Heart right ventricle (tissue), 16 donors: ENCODE measurements at regions of chr17 and their contacts with region 1.

Region 1: DNA sequence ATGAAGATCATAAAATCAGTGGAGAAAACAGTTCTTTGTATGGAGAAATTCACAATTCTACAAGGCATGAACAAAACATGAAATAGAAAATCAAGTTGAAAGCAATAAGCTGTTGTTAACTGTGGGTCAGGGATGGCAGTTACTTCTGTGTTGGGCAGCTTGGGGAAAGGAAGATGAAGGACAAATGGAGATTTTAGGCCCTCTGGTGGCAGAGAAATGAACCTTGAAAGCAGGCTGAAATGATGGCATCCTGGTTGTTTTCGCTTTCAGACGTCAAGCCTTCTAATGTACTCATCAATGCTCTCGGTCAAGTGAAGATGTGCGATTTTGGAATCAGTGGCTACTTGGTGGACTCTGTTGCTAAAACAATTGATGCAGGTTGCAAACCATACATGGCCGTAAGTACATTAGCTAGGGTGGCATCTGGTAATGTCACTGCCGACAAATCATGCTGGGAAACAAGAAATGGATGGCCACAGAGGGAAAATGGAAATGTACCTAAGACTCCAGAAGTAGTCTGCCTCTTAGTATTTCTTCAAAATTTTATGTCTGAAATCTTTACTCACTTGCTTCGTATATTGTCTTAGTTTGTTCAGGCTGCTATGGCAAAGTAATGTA is 108.9 kb downstream of the MAP2K6 start:
- DNase-seq: peak in 1 of 2 donors; percentile 21
- ATAC-seq: peak in 5 of 8 donors; percentile 61 to 75 (median 65)
- H3K4me3 ChIP-seq: peak overlapping the region in 1 of 10 donors; percentile 6
- H3K27ac ChIP-seq: no peak overlapping the region
- H3K4me1 ChIP-seq: peaks cover 0 to 6% (median 0%) of the 10 kb centered on the region in 9 donors
- H3K27me3 ChIP-seq: no peaks in the 10 kb centered on the region
- CTCF ChIP-seq: peak; percentile 48 to 73 (median 69)

Region 2: DNA sequence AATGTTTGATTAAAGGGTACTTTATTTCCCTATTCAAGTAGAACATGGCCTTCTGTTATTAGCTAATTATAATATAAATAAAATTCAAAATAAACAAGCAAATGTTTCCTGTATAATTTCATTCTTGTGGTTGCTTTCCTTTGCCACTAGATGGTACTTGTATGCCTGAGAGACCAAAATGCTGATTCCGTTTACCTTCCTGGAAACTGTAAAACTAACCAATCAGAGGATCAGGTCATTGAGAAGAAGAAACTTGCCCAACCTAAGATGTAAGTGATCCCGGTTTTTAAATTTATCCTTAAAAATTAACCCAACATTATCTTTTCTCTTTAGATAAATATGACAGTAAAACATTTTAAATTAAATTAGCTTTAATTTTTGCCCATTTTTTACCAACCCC is 188.3 kb before region 1 on chr17:
- intact Hi-C with region 1: loop called (anchors 1 to 10 kb)
- DNase-seq: no peak
- ATAC-seq: peak in 1 of 8 donors; percentile 57
- H3K4me3 ChIP-seq: no peak overlapping the region
- H3K27ac ChIP-seq: no peak overlapping the region
- H3K4me1 ChIP-seq: no peaks in the 10 kb centered on the region
- H3K27me3 ChIP-seq: peaks cover 0 to 6% (median 0%) of the 10 kb centered on the region in 7 donors
- CTCF ChIP-seq: peak; percentile 13 to 62 (median 53)

Region 3: DNA sequence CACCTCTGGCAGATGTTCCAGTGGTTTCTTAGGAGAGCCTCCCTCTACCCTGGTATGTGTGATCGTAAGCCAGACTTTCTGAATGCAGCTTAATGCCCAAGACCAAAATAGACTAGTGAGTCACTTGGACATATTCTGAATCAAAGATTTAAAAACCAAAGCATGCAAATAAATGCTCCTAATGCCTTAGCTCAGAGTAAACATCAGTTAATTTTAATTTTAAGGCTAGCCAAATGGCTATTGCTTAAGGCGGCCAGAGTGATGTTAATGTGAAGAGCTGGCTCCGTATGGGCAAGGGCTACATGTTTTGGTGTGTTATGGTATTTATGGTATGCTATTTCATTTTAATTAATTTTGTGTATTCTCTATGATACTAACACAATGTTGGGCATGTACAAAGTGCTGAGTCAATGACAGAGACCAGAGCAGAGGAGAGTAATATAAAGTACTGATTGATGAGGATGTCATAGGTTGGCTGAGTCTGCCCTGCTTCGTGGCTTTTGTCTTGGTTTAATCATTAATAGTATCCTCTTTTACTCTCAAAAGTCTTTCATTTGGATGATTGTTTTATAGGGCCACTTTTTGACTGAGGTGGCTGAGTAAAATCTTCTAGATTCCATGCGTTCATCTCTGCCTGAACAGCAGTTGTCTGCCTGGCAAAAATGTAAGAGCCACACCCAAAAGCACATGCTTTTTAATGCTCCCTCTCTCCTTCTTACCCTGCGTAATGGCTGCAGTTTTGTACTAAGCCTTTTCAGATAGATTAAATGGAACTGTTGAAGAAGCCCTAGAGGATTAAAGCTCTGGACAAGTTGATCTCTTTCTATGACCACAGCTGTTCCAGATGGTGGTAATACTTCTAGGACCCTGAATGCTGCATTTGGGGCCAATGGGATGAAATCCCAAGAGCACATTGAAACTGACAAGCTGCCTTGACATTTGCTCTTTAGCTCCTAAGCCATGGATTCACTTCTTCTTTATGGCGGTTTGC is 49.2 kb before region 1 on chr17:
- intact Hi-C with region 1: no loop called
- DNase-seq: no peak
- ATAC-seq: peak in 5 of 8 donors; percentile 41 to 79 (median 55)
- H3K4me3 ChIP-seq: no peak overlapping the region
- H3K27ac ChIP-seq: peak overlapping the region in 3 of 10 donors; percentile 1 to 25 (median 7)
- H3K4me1 ChIP-seq: peaks cover 0 to 11% (median 0%) of the 10 kb centered on the region in 9 donors
- H3K27me3 ChIP-seq: no peaks in the 10 kb centered on the region
- CTCF ChIP-seq: no peak

Region 4: GRCh38 chr17:69501591-69502468 is 21.5 kb before region 1 on chr17:
- intact Hi-C with region 1: no loop called
- DNase-seq: peak in 1 of 2 donors; percentile 22
- ATAC-seq: peak; percentile 46 to 76 (median 60)
- H3K4me3 ChIP-seq: peak overlapping the region in 8 of 10 donors; percentile 1 to 39 (median 37)
- H3K27ac ChIP-seq: peak overlapping the region in 7 of 10 donors; percentile 9 to 77 (median 44)
- H3K4me1 ChIP-seq: peaks cover 0 to 26% (median 14%) of the 10 kb centered on the region in 9 donors
- H3K27me3 ChIP-seq: no peaks in the 10 kb centered on the region
- CTCF ChIP-seq: no peak

Region 5: DNA sequence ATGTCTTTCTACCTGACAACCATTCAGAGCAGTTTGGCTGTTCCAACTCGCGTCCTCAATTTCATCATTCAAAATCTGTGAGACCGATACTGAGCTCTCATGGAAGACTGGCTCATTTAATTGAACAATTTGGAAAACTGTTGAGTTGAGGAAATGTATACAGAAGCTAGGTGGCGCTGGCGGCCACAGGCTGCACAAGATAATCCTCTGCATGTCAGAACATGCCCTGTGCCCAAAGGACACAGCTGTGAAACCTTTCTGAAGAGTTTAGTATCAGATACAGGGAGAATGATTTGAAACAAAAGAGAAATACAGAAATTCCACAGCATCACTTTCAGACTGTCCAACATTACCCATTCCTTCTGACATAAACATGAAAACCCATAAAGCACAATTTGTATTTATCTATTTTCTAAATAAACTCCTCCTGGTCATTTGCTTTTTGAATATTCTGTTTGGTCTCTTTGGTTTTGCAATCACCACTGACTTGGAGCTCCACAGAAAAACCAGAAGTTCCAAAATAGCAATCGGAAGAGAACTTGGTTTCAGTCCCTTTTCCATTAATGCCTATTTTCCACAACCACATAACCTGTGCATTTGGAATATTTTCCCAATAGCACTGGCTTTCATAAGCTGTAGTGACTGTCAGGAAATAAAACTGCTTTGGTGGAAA is 83.9 kb after region 1 on chr17:
- intact Hi-C with region 1: loop called in 1 of 10 experiments (anchors 10 kb)
- DNase-seq: peak; percentile 65 to 78
- ATAC-seq: peak; percentile 78 to 92 (median 87)
- H3K4me3 ChIP-seq: no peak overlapping the region
- H3K27ac ChIP-seq: peak overlapping the region; percentile 5 to 82 (median 50)
- H3K4me1 ChIP-seq: peaks cover 15 to 40% (median 35%) of the 10 kb centered on the region in 9 donors
- H3K27me3 ChIP-seq: no peaks in the 10 kb centered on the region
- CTCF ChIP-seq: peak; percentile 74 to 92 (median 88)

Region 6: DNA sequence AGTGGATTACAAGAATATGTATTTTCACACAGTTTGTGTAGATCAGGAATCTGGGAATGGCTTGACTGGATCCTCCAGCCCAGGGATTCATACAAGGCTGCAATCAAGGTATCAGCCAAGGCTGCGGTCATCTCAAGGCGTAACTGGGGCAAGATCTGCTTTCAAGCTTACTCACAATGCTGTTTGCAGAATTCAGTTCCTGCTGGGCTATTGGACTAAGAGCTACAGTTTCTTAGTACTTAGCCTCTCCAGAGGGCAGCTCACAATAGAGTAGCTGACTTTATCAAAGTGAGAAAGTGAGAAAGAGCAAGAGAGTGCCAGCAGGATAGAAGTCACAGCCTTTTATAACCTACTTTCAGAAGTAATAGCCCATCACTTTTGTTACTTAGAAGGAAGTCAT is 102.1 kb after region 1 on chr17:
- intact Hi-C with region 1: no loop called
- DNase-seq: no peak
- ATAC-seq: no peak
- H3K4me3 ChIP-seq: no peak overlapping the region
- H3K27ac ChIP-seq: no peak overlapping the region
- H3K4me1 ChIP-seq: no peaks in the 10 kb centered on the region
- H3K27me3 ChIP-seq: peaks cover 0 to 4% (median 0%) of the 10 kb centered on the region in 7 donors
- CTCF ChIP-seq: no peak